ENCODE measurements at regions of chr13 and their contacts with region 1.

Region 1: DNA sequence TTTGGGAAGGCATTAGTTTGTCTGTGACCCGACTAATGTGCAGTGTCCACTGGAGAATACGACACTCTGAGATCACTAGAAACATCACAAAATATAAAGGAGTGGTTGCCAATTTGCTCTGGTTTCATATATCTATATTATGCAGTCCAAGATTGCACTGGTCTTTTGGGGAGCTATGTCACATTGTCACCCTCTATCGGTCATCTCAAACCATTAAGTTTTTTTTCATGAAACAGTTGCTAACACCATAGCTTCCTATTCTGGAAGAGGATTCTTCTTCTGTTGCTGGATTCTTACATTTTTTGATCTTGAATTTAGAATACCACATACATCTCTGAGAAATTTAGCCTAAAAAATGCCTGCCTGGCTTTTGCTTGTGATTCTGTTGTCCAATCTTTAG is 168.6 kb downstream of the LACC1 start:
- DNase-seq: peak; percentile 58

Region 2: DNA sequence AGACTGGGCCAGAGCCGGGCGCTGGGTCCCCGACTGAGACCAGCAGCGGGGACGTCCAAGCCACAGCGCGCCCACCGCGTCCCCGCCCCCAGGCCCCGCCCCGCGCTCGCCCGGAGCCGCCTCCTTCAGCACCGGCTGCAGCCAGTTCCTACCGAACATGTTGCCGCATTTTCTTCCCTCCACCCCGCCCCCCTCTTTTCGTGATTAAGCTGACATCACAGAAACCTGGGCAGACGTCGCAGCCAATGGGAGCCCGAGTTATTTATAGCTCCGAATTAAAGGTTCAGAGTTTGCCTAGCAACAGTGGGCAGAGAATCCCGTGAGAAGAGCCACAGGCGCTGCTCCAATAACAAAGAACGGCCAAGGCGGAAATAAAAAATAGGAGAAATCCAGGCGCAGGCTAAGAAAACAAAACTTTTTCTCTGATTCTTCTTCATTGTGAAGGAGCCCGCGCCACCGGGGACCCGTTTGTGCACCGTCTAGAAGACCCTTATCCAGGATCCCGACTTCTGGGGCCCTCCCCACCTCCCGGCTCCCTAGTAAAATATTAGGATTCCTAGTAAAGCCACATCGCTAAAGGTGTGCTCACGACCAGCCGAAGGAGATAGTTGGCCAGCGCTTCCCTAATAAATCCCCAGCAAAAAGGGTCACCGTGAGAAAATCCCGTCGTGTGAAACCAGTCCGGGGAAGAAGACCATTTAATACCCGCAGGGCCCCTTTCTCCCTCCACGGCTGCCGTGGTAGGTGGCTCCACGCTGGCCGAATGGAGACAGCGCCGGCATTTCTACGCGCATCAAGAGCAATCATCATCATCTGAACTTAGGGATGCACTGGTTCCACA is 387.0 kb after region 1 on chr13:
- in situ Hi-C with region 1: loop called (anchors 25 kb)
- DNase-seq: peak; percentile 98

Measured in SK-MEL-5 (cell line).